ENCODE measurements at regions of chr15 and their contacts with region 1.

Region 1: GRCh38 chr15:29668120-29668602 is 154.1 kb downstream of the TJP1 start:
- DNase-seq: peak; percentile 89
- ATAC-seq: peak; percentile 98
- H3K4me3 ChIP-seq: no peak overlapping the region
- H3K27ac ChIP-seq: no peak overlapping the region
- H3K4me1 ChIP-seq: peaks cover 15% of the 10 kb centered on the region
- H3K27me3 ChIP-seq: peaks cover 0 to 3% of the 10 kb centered on the region in 2 experiments; a peak in 1 of 5 replicates
- CTCF ChIP-seq: peak; percentile 93
- EP300 ChIP-seq: no peak
- POLR2A ChIP-seq: no peak
- RAD21 ChIP-seq: peak; percentile 91

Region 2: GRCh38 chr15:29736744-29737020 is 68.5 kb after region 1 on chr15:
- CTCF ChIA-PET with region 1: interaction called, 4 read pairs
- POLR2A ChIA-PET with region 1: no interaction called
- in situ Hi-C with region 1: no loop called
- intact Hi-C with region 1: loop called (anchors 2 kb)
- DNase-seq: peak; percentile 92
- ATAC-seq: peak; percentile 84
- H3K4me3 ChIP-seq: no peak overlapping the region
- H3K27ac ChIP-seq: no peak overlapping the region
- H3K4me1 ChIP-seq: peaks cover 30% of the 10 kb centered on the region
- H3K27me3 ChIP-seq: no peaks in the 10 kb centered on the region
- CTCF ChIP-seq: no peak
- EP300 ChIP-seq: peak in 1 of 2 experiments; percentile 60; a peak in 1 of 4 replicates
- POLR2A ChIP-seq: no peak
- RAD21 ChIP-seq: no peak

Region 3: DNA sequence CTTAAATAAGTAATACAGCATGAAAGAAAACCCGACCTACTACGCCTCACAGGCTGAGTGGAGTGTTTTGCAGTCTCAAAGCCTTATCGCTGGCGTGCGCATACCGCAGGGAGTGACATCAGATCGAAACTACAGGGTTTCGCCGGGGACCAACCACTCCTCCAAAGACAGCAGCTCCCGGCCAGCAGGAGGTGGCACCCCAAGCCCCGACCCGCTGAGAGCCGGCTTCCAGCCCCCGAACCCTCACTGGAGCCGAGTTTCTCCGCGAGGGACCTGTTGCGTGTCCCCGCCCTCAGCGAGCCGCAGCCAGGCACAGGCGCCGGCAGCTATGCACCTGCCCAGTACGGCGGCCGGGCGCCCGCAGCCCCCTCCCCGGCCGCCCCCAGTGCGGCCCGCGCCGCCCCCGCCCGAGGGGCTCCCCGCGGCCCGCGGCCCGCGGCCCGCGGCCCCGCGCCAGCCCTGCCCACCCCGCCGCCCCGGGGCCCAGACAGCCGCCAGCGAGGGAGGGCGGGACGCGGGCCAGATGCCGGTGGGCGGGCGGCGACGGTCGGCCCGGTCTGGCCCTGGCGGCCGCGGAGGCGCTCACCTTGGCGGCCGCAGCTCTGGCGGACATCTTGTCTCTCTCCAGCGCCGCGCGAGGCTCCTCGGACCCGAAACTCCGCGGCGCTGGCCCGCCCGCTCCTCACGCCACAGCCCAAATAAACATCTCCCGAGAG is 153.4 kb after region 1 on chr15:
- CTCF ChIA-PET with region 1: no interaction called
- POLR2A ChIA-PET with region 1: no interaction called
- in situ Hi-C with region 1: no loop called
- intact Hi-C with region 1: loop called (anchors 10 kb)
- DNase-seq: peak; percentile 74
- ATAC-seq: peak; percentile 73
- H3K4me3 ChIP-seq: peak overlapping the region; percentile 84 to 90 (median 87)
- H3K27ac ChIP-seq: peak overlapping the region; percentile 98
- H3K4me1 ChIP-seq: peaks cover 37% of the 10 kb centered on the region
- H3K27me3 ChIP-seq: peaks cover 0 to 1% of the 10 kb centered on the region in 2 experiments; a peak in 1 of 5 replicates
- CTCF ChIP-seq: 0 out of 2 replicates have a peak, but pooled peaks have one; percentile 15
- EP300 ChIP-seq: no peak
- POLR2A ChIP-seq: peak; percentile 39 to 76; a peak in 3 of 4 replicates
- RAD21 ChIP-seq: no peak

Region 4: DNA sequence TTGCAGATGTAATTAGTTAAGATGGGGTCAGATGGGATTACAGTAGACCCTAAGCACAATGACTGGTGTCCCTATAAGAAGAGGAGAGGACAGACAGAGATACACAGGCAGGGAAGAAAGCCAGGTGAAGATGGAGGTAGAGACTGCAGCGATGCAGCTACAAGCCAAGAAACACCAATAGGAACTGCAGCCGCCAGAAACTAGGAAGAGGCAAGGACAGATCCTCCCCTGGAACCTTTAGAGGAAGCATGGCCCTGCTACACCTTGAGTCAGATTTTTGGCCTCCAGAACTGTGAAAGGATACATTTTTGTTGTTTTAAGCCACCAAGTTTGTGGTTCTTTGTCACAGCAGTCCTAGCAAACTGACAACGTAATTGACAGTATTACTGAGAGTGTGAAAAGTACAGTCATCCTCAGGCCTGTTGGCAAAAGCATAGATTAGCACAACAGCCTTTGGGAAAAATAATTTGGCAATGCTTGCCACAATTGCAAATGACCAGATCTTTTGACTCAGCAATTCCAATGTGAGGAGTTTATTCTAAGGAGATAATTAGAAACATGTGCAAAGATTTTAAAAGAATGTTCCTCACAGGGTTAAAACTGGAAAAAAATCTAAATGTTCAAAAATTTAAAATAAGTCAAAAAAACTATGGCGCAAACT is 236.7 kb after region 1 on chr15:
- CTCF ChIA-PET with region 1: no interaction called
- POLR2A ChIA-PET with region 1: no interaction called
- in situ Hi-C with region 1: no loop called
- intact Hi-C with region 1: no loop called
- DNase-seq: no peak
- ATAC-seq: no peak
- H3K4me3 ChIP-seq: no peak overlapping the region
- H3K27ac ChIP-seq: no peak overlapping the region
- H3K4me1 ChIP-seq: no peaks in the 10 kb centered on the region
- H3K27me3 ChIP-seq: no peaks in the 10 kb centered on the region; a peak in 1 of 5 replicates
- CTCF ChIP-seq: no peak
- EP300 ChIP-seq: no peak
- POLR2A ChIP-seq: no peak
- RAD21 ChIP-seq: no peak

Region 5: GRCh38 chr15:29925227-29926082 is 257.3 kb after region 1 on chr15:
- CTCF ChIA-PET with region 1: interaction called, 42 read pairs
- POLR2A ChIA-PET with region 1: no interaction called
- in situ Hi-C with region 1: loop called (anchors 5 kb)
- intact Hi-C with region 1: loop called (anchors 2 kb)
- DNase-seq: peak; percentile 57
- ATAC-seq: peak; percentile 95
- H3K4me3 ChIP-seq: no peak overlapping the region
- H3K27ac ChIP-seq: no peak overlapping the region
- H3K4me1 ChIP-seq: peaks cover 26% of the 10 kb centered on the region
- H3K27me3 ChIP-seq: no peaks in the 10 kb centered on the region
- CTCF ChIP-seq: peak; percentile 81
- EP300 ChIP-seq: no peak
- POLR2A ChIP-seq: no peak
- RAD21 ChIP-seq: peak; percentile 71

Region 6: GRCh38 chr15:30065025-30065801 is 397.1 kb after region 1 on chr15:
- CTCF ChIA-PET with region 1: no interaction called
- POLR2A ChIA-PET with region 1: no interaction called
- in situ Hi-C with region 1: loop called (anchors 25 kb)
- intact Hi-C with region 1: loop called (anchors 10 kb)
- DNase-seq: no peak
- ATAC-seq: no peak
- H3K4me3 ChIP-seq: no peak overlapping the region
- H3K27ac ChIP-seq: no peak overlapping the region
- H3K4me1 ChIP-seq: no peaks in the 10 kb centered on the region
- H3K27me3 ChIP-seq: peaks cover 0 to 3% of the 10 kb centered on the region in 2 experiments; a peak in 1 of 5 replicates
- CTCF ChIP-seq: no peak
- EP300 ChIP-seq: no peak
- POLR2A ChIP-seq: no peak
- RAD21 ChIP-seq: no peak

Region 7: GRCh38 chr15:30073915-30074314 is 405.8 kb after region 1 on chr15:
- CTCF ChIA-PET with region 1: interaction called, 27 read pairs
- POLR2A ChIA-PET with region 1: no interaction called
- in situ Hi-C with region 1: loop called (anchors 25 kb)
- intact Hi-C with region 1: loop called (anchors 10 kb)
- DNase-seq: no peak
- ATAC-seq: no peak
- H3K4me3 ChIP-seq: no peak overlapping the region
- H3K27ac ChIP-seq: no peak overlapping the region
- H3K4me1 ChIP-seq: no peaks in the 10 kb centered on the region
- H3K27me3 ChIP-seq: no peaks in the 10 kb centered on the region; a peak in 1 of 5 replicates
- CTCF ChIP-seq: no peak
- EP300 ChIP-seq: no peak
- POLR2A ChIP-seq: no peak
- RAD21 ChIP-seq: no peak

Measured in HepG2 (cell line).